ENCODE measurements at regions of chr13 and their contacts with region 1.

Region 1: DNA sequence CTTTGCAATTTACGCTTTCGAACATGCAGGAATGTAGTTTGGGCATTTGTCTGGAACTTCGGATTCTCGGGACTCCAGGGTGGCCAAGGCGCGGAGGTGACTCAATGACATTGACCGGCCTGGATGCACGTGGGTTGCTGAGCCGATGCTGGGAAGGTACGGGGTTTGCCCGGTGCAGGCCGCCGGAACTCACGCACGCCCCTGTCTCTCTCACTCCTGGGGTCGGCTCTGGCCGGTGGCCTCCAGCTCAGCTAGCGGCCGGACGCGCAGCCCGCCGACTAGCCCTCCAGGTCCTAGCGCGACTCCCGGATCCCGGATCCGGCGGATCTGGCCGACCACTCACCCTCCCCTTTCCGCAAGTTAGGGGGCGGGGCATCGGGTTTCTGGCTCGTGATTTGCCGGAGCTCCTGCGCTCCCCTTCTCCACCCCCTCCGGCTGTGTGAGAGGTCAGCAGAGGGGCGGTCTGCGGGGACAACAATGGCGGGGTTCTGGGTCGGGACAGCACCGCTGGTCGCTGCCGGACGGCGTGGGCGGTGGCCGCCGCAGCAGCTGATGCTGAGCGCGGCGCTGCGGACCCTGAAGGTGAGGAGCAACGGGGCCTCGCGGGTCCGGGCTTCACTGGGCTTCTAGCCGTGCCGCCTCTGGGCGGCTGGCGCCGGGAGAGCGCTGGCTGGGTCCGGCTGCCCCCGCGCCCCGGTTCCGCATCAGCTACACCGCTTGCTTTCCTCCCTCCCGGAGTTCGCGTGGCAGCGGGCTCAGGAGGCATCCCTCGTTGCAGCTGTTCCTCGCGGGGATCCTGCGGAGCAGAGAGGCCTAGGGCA is at the start of gene PCCA:
- DNase-seq: peak; percentile 80
- H3K4me3 Mint-ChIP-seq: peak within 1 kb of the TSS; percentile 92
- H3K27ac Mint-ChIP-seq: peak within 1 kb of the TSS; percentile 87
- H3K4me1 Mint-ChIP-seq: peaks cover 24% of the 10 kb centered on the region
- H3K27me3 Mint-ChIP-seq: peaks cover 8% of the 10 kb centered on the region
- total RNA-seq, gene PCCA: 8.6 and 9.7 TPM in 2 replicates

Region 2: DNA sequence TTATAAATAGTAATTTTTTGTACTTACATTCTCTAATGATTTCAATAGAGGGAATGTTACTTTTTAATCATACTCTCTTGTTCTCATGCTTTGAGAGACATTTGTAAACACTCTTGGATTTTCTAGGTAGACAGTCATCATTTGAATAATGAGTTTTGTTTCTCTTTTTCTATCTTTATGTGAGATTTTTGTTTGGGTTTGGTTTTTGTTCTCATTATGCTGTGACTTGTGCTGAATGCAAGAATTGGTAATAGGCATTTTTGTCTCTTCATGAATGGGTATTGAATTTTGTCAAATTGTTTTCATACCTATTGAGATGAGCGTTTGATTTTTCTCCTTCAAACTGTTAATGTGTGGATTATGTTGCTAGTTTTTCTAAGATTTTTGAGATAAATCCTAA is 724.9 kb before region 1 on chr13:
- intact Hi-C with region 1: loop called (anchors 5 kb)
- DNase-seq: no peak
- H3K4me3 Mint-ChIP-seq: no peak overlapping the region
- H3K27ac Mint-ChIP-seq: peak overlapping the region; percentile 11
- H3K4me1 Mint-ChIP-seq: peaks cover 84% of the 10 kb centered on the region
- H3K27me3 Mint-ChIP-seq: peaks cover 3% of the 10 kb centered on the region

Region 3: DNA sequence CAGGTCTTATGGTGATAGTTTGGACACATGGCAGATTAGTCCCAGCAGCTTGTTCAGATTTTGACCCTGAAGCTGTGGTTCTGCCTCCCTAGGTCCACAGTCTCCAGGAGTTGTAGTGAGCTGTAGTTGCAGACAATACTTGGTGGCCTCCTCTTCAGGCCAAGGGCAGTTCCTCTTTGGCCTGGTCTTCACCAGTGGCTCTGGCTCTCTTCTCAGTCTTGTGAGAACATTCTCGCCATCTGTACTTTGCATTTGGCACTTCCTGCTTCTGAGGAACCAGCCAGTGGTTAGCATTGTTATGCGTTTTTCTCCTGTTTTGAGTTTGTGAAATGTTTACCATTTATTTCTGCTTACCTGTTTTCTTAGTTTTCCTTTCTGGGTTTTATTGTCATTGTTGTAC is 40.8 kb after region 1 on chr13:
- intact Hi-C with region 1: loop called (anchors 2 kb)
- DNase-seq: peak; percentile 14
- H3K4me3 Mint-ChIP-seq: peak overlapping the region; percentile 44
- H3K27ac Mint-ChIP-seq: peak overlapping the region; percentile 77
- H3K4me1 Mint-ChIP-seq: peaks cover 39% of the 10 kb centered on the region
- H3K27me3 Mint-ChIP-seq: no peaks in the 10 kb centered on the region

Region 4: DNA sequence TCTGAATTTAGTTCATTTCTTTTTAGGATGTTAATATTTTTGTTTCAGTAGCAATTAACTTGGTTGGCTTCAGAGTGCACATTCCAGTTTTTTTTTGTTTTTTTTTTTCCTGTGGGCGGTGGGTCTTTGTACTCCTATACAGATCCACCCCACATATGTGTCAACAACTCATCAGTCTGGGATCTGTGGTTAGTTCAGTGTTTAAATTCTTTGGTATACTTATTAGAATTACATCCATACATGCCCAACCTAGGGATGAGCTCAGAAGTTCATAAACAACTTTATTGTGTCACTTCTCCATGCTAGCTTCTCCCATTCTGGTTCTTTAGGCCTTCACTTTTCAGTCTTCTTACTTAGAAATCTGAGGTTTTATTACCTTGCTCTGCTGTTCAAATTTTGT is 51.0 kb after region 1 on chr13:
- intact Hi-C with region 1: no loop called
- DNase-seq: no peak
- H3K4me3 Mint-ChIP-seq: no peak overlapping the region
- H3K27ac Mint-ChIP-seq: no peak overlapping the region
- H3K4me1 Mint-ChIP-seq: peaks cover 19% of the 10 kb centered on the region
- H3K27me3 Mint-ChIP-seq: peaks cover 1% of the 10 kb centered on the region

Region 5: GRCh38 chr13:100235311-100235901 is 146.6 kb after region 1 on chr13:
- intact Hi-C with region 1: loop called (anchors 1 kb)
- DNase-seq: no peak
- H3K4me3 Mint-ChIP-seq: no peak overlapping the region
- H3K27ac Mint-ChIP-seq: no peak overlapping the region
- H3K4me1 Mint-ChIP-seq: peaks cover 15% of the 10 kb centered on the region
- H3K27me3 Mint-ChIP-seq: no peaks in the 10 kb centered on the region

Region 6: DNA sequence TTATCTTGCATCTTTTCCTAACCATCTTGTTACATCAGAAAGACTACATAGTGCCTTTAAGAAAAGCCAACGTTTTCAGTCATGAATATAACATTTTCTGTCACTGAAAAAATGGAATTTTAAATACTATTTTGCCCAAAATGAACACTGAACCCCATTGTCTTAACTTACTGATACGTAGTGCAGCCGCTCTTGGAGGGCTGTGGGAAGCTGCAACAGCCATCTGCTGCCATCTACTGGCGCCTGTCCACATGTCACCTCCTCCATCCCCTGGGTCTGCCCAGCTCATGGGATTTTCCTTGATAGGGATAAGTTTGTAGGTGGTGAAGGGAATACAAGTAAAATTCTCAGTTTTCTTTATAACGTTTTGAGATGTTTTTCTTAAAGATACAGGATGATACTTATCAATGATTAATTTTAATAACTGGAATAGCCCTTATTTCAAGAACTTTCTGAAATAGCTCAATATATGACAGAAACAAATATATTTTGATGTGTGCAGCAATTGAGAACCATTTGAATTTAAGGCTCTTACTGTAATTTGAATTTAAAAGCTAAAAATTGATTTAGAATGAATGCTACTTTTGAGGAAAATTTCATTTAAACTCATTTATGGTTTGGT is 426.0 kb after region 1 on chr13:
- intact Hi-C with region 1: loop called (anchors 2 kb)
- DNase-seq: peak; percentile 52
- H3K4me3 Mint-ChIP-seq: no peak overlapping the region
- H3K27ac Mint-ChIP-seq: no peak overlapping the region
- H3K4me1 Mint-ChIP-seq: peaks cover 54% of the 10 kb centered on the region
- H3K27me3 Mint-ChIP-seq: peaks cover 7% of the 10 kb centered on the region

Region 7: DNA sequence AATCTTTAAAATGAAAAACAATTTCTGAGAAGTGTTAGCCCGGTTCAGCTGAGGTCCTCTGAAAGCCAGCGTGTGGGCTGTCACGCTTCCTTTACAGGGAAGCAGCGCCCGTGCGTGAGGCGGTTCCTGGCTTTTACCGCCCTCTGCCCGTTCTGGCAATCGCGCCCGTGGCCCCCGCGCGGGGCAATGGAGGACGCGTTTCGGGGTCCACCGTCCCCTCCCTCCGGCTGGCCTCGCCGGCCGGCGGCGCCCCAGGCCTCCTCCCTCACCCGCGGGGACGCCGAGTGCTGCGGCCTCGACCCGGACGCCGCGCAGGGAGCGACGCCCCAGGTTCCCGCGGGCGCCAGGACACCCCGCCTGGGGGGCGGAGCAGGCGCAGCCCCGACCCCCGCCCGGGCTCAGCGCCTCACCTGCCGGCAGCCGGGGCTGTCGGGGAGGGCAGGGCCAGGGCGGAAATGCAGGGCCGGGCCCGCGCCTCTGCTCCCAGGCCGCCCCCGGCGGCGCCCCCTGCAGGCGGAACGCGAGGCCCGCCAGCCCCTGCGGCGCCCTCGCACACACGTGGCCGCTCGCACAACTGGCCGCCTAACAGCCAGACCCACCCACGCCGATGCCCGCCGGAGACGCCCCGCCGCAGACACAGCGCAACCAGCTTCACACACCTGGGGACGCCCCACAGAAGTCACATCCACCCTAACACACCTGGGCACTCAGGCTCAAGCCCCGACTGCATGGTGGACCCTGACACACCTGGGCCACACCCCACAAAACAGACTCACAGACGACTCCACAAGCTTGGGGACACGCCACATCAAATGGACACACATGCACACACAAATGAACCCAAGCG is 499.7 kb after region 1 on chr13 and contains the start of gene GGACT:
- intact Hi-C with region 1: loop called (anchors 5 kb)
- DNase-seq: peak; percentile 79
- H3K4me3 Mint-ChIP-seq: peak within 1 kb of the TSS; percentile 87
- H3K27ac Mint-ChIP-seq: peak within 1 kb of the TSS; percentile 94
- H3K4me1 Mint-ChIP-seq: peaks cover 57% of the 10 kb centered on the region
- H3K27me3 Mint-ChIP-seq: no peaks in the 10 kb centered on the region
- total RNA-seq, gene GGACT: 4.0 and 7.2 TPM in 2 replicates